IMR-90 (cell line): ENCODE measurements at regions of chr3 and their contacts with region 1.

Region 1: GRCh38 chr3:120795017-120795648 is 52.6 kb downstream of the GTF2E1 start:
- DNase-seq: peak; percentile 82
- ATAC-seq: peak; percentile 79
- H3K4me3 ChIP-seq: no peak overlapping the region
- H3K27ac ChIP-seq: no peak overlapping the region
- H3K4me1 ChIP-seq: peaks cover 8% of the 10 kb centered on the region
- H3K27me3 ChIP-seq: no peaks in the 10 kb centered on the region
- CTCF ChIP-seq: peak; percentile 91
- POLR2A ChIP-seq: no peak
- RAD21 ChIP-seq: peak; percentile 87

Region 2: GRCh38 chr3:120245386-120245785 is 549.7 kb before region 1 on chr3:
- CTCF ChIA-PET with region 1: no interaction called
- POLR2A ChIA-PET with region 1: no interaction called
- dilution Hi-C with region 1: no loop called
- in situ Hi-C with region 1: loop called (anchors 10 kb)
- intact Hi-C with region 1: loop called (anchors 5 kb)
- DNase-seq: no peak
- ATAC-seq: no peak
- H3K4me3 ChIP-seq: no peak overlapping the region
- H3K27ac ChIP-seq: no peak overlapping the region
- H3K4me1 ChIP-seq: no peaks in the 10 kb centered on the region; the same call in 1 of the 2 replicates
- H3K27me3 ChIP-seq: peaks cover 12% of the 10 kb centered on the region
- CTCF ChIP-seq: no peak
- POLR2A ChIP-seq: no peak
- RAD21 ChIP-seq: no peak

Region 3: GRCh38 chr3:120450600-120451271 is 344.4 kb before region 1 on chr3 and contains the start of gene FSTL1:
- CTCF ChIA-PET with region 1: interaction called, 3 read pairs
- POLR2A ChIA-PET with region 1: no interaction called
- dilution Hi-C with region 1: no loop called
- in situ Hi-C with region 1: loop called (anchors 25 kb)
- intact Hi-C with region 1: no loop called
- DNase-seq: peak; percentile 70
- ATAC-seq: peak; percentile 76
- H3K4me3 ChIP-seq: peak within 1 kb of the TSS; percentile 94
- H3K27ac ChIP-seq: peak within 1 kb of the TSS; percentile 98
- H3K4me1 ChIP-seq: peaks cover 17% of the 10 kb centered on the region
- H3K27me3 ChIP-seq: no peaks in the 10 kb centered on the region
- CTCF ChIP-seq: no peak
- POLR2A ChIP-seq: peak; percentile 93
- RAD21 ChIP-seq: no peak
- total RNA-seq, gene FSTL1: 1,097 and 1,642 TPM in 2 replicates

Region 4: GRCh38 chr3:120596116-120596852 is 198.8 kb before region 1 on chr3 and contains the start of gene NDUFB4:
- CTCF ChIA-PET with region 1: no interaction called
- POLR2A ChIA-PET with region 1: no interaction called
- dilution Hi-C with region 1: no loop called
- in situ Hi-C with region 1: loop called (anchors 10 kb)
- intact Hi-C with region 1: loop called (anchors 10 kb)
- DNase-seq: peak; percentile 99
- ATAC-seq: peak; percentile 99
- H3K4me3 ChIP-seq: peak within 1 kb of the TSS; percentile 70
- H3K27ac ChIP-seq: peak within 1 kb of the TSS; percentile 87
- H3K4me1 ChIP-seq: no peaks in the 10 kb centered on the region
- H3K27me3 ChIP-seq: no peaks in the 10 kb centered on the region
- CTCF ChIP-seq: no peak
- POLR2A ChIP-seq: peak; percentile 88
- RAD21 ChIP-seq: 0 out of 2 replicates have a peak, but pooled peaks have one; percentile 8
- total RNA-seq, gene NDUFB4: 53.9 and 62.8 TPM in 2 replicates

Region 5: DNA sequence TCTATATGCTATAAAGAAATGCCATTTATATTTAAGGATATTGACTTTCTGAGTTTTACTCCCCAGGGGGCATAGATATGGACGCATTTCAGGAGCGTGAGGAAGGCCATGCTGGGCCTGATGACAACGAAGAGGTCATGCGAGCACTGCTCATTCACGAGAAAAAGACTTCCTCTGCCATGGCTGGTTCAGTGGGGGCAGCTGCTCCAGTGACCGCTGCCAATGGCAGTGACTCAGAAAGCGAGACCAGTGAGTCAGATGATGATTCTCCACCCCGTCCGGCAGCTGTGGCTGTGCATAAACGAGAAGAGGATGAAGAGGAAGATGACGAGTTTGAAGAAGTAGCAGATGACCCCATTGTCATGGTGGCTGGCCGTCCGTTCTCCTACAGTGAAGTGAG is 14.2 kb before region 1 on chr3:
- CTCF ChIA-PET with region 1: interaction called, 7 read pairs
- POLR2A ChIA-PET with region 1: no interaction called
- dilution Hi-C with region 1: no loop called
- in situ Hi-C with region 1: no loop called
- intact Hi-C with region 1: loop called (anchors 1 kb)
- DNase-seq: peak; percentile 93
- ATAC-seq: peak; percentile 87
- H3K4me3 ChIP-seq: peak overlapping the region; percentile 12; the same call in 1 of the 2 replicates
- H3K27ac ChIP-seq: peak overlapping the region; percentile 36
- H3K4me1 ChIP-seq: peaks cover 2% of the 10 kb centered on the region
- H3K27me3 ChIP-seq: no peaks in the 10 kb centered on the region
- CTCF ChIP-seq: no peak
- POLR2A ChIP-seq: no peak
- RAD21 ChIP-seq: 0 out of 2 replicates have a peak, but pooled peaks have one; percentile 4